PC-3 (cell line): ENCODE measurements at regions of chr2 and their contacts with region 1.

Region 1: GRCh38 chr2:19098467-19099159 is 259.8 kb downstream of the OSR1 start:
- DNase-seq: peak; percentile 78
- ATAC-seq: peak; percentile 59
- H3K4me3 ChIP-seq: no peak overlapping the region
- H3K27ac ChIP-seq: peak overlapping the region; percentile 28
- H3K4me1 ChIP-seq: peaks cover 56% of the 10 kb centered on the region
- H3K27me3 ChIP-seq: no peaks in the 10 kb centered on the region
- CTCF ChIP-seq: no peak

Region 2: GRCh38 chr2:18950361-18950851 is 148.2 kb before region 1 on chr2:
- CTCF ChIA-PET with region 1: no interaction called
- POLR2A ChIA-PET with region 1: no interaction called
- intact Hi-C with region 1: no loop called
- DNase-seq: peak; percentile 60
- ATAC-seq: peak; percentile 64
- H3K4me3 ChIP-seq: no peak overlapping the region
- H3K27ac ChIP-seq: no peak overlapping the region
- H3K4me1 ChIP-seq: peaks cover 23% of the 10 kb centered on the region
- H3K27me3 ChIP-seq: no peaks in the 10 kb centered on the region
- CTCF ChIP-seq: no peak

Region 3: DNA sequence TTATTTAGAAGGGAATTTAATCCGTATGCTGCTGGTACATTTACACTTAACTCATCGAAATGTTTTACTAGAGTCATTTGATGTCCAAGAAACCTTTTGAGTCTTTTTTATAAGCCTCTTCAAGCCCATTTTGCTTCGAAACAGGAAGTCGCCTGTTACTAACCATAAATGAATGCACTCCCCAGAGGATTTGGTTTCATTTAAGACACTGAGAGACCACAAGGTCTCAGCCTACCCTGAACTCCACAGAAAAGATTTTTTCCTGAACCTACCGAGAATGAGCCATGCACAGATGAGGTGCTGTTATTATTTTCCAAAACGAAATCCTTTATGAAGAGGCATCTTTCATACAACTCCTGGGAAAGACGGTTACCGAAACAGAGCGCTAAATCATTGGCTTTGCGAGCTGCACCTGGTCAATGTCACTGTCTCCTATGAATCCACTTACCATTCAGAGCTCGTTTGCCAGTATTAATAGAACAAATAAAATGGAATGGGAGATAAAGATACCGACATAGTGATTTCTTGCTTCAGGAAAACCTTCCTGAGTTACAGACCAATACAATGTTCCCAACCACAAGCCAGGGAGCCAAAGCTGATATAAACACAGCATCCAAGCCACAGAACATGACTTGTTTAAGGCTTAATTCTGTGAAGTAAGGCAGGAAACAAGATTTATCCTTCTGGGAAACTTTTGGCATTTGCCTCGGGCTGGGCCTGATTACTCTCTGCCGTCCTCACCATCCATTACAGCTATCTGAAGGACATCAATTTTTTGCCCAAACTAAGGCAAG is 122.2 kb before region 1 on chr2:
- CTCF ChIA-PET with region 1: no interaction called
- POLR2A ChIA-PET with region 1: no interaction called
- intact Hi-C with region 1: loop called (anchors 2 kb)
- DNase-seq: peak; percentile 89
- ATAC-seq: peak; percentile 81
- H3K4me3 ChIP-seq: peak overlapping the region; percentile 14
- H3K27ac ChIP-seq: peak overlapping the region; percentile 64
- H3K4me1 ChIP-seq: peaks cover 30% of the 10 kb centered on the region
- H3K27me3 ChIP-seq: no peaks in the 10 kb centered on the region
- CTCF ChIP-seq: no peak

Region 4: DNA sequence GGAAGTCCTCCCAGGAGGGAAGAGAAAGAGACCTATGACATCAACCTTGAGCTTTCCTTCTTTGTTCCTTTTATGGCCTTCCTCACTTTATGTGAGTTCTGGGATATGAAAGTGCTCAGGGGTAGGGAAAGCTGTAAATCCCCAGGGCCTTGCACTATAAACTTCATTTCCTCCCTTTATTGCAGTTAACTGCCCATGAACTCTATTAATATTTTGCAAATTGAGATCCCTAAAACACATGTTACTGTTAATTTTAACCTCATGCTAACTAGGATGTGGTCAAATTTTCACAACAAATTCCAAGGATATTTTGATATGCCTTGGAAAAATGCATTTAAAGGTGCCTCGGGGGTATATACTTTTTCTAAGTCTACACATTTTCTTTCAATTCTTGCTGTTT is 100.1 kb before region 1 on chr2:
- CTCF ChIA-PET with region 1: no interaction called
- POLR2A ChIA-PET with region 1: no interaction called
- intact Hi-C with region 1: no loop called
- DNase-seq: no peak
- ATAC-seq: no peak
- H3K4me3 ChIP-seq: no peak overlapping the region
- H3K27ac ChIP-seq: no peak overlapping the region
- H3K4me1 ChIP-seq: no peaks in the 10 kb centered on the region
- H3K27me3 ChIP-seq: no peaks in the 10 kb centered on the region
- CTCF ChIP-seq: no peak

Region 5: GRCh38 chr2:19038071-19039015 is 60.3 kb before region 1 on chr2:
- CTCF ChIA-PET with region 1: no interaction called
- POLR2A ChIA-PET with region 1: no interaction called
- intact Hi-C with region 1: no loop called
- DNase-seq: peak; percentile 81
- ATAC-seq: peak; percentile 86
- H3K4me3 ChIP-seq: no peak overlapping the region
- H3K27ac ChIP-seq: peak overlapping the region; percentile 86
- H3K4me1 ChIP-seq: peaks cover 26% of the 10 kb centered on the region
- H3K27me3 ChIP-seq: no peaks in the 10 kb centered on the region
- CTCF ChIP-seq: no peak